OCI-LY7 (cell line): ENCODE measurements at regions of chr15 and their contacts with region 1.

Region 1: DNA sequence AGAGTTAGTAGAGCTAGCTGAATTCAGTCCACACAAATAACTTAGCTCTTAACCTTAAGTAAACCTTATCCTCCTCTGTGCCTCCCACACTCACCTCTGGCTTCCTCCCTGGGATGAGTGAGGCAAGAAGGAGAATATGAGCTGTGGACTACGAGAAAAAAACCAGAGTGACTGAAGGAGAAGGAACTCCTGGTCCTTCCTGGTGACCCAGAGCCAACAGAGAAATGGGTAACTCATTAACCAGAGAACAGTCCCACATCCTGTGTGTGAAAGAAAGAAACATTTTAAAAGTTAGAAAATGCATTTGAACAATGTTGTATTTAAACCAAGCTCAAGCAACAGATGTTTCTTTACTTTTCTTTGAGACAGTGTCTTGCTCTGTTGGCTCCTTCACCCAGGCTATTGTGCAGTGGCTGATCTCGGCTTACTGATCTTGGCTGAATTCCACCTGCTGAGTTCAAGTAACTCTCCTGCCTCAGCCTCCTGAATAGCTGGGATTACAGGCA is 27.5 kb upstream of the FAM81A start:
- DNase-seq: peak; percentile 55
- H3K4me3 ChIP-seq: no peak overlapping the region
- H3K27ac ChIP-seq: peak overlapping the region; percentile 81
- H3K4me1 ChIP-seq: peaks cover 94% of the 10 kb centered on the region
- CTCF ChIP-seq: no peak

Region 2: DNA sequence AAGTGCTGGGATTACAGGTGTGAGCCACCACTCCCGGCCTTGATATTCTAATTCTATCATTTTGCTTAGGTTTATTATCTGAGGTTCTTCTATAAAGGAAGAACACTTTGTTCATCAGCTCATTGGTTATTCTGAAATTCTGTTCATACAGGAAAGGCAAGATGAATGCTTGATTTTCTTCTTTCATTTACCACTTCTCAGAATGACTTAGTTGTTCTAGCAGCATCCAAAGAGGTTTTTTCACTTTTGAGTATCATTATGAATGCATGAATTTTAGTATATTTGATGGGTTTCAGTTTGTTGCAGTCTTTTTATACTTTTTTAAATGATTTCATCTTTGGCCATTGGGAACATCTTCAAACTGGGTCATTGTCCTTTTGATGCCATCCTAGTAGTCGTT is 371.2 kb before region 1 on chr15:
- CTCF ChIA-PET with region 1: no interaction called
- POLR2A ChIA-PET with region 1: no interaction called
- intact Hi-C with region 1: no loop called
- DNase-seq: no peak
- H3K4me3 ChIP-seq: no peak overlapping the region
- H3K27ac ChIP-seq: no peak overlapping the region
- H3K4me1 ChIP-seq: no peaks in the 10 kb centered on the region
- CTCF ChIP-seq: no peak

Region 3: GRCh38 chr15:59174835-59175831 is 235.3 kb before region 1 on chr15:
- CTCF ChIA-PET with region 1: no interaction called
- POLR2A ChIA-PET with region 1: no interaction called
- intact Hi-C with region 1: loop called (anchors 1 kb)
- DNase-seq: peak; percentile 71
- H3K4me3 ChIP-seq: no peak overlapping the region
- H3K27ac ChIP-seq: no peak overlapping the region
- H3K4me1 ChIP-seq: no peaks in the 10 kb centered on the region
- CTCF ChIP-seq: peak; percentile 85

Region 4: GRCh38 chr15:59247364-59247763 is 163.1 kb before region 1 on chr15:
- CTCF ChIA-PET with region 1: interaction called, 7 read pairs
- POLR2A ChIA-PET with region 1: interaction called, 4 read pairs
- intact Hi-C with region 1: loop called (anchors 1 kb)
- DNase-seq: peak; percentile 88
- H3K4me3 ChIP-seq: no peak overlapping the region
- H3K27ac ChIP-seq: no peak overlapping the region
- H3K4me1 ChIP-seq: peaks cover 64% of the 10 kb centered on the region
- CTCF ChIP-seq: peak; percentile 93

Region 5: DNA sequence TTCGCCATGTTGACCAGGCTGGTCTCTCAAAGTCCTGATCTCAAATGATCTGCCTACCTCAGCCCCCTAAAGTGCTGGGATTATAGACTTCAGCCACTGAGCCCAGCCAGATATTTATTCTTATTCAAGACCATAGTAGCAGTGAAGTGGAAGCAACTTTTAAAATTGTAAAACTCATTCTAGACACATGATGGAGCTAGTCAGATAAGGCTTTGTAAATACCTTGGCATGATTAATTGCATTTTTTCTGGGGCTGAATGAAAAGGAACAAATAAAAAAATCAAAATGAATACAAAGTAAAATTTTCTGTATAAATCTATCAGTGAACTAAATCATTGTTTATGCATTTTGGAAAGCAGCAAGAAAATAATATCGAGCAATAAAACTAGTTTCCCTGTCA is 33.7 kb before region 1 on chr15:
- CTCF ChIA-PET with region 1: interaction called, 10 read pairs
- POLR2A ChIA-PET with region 1: interaction called, 37 read pairs
- intact Hi-C with region 1: loop called (anchors 1 kb)
- DNase-seq: peak; percentile 65
- H3K4me3 ChIP-seq: no peak overlapping the region
- H3K27ac ChIP-seq: no peak overlapping the region
- H3K4me1 ChIP-seq: peaks cover 24% of the 10 kb centered on the region
- CTCF ChIP-seq: peak; percentile 78

Region 6: GRCh38 chr15:59399465-59400102 is 10.9 kb before region 1 on chr15:
- CTCF ChIA-PET with region 1: interaction called, 6 read pairs
- POLR2A ChIA-PET with region 1: interaction called, 103 read pairs
- intact Hi-C with region 1: no loop called
- DNase-seq: peak; percentile 90
- H3K4me3 ChIP-seq: peak overlapping the region; percentile 54
- H3K27ac ChIP-seq: peak overlapping the region; percentile 81
- H3K4me1 ChIP-seq: peaks cover 98% of the 10 kb centered on the region
- CTCF ChIP-seq: peak; percentile 44; the same call in 1 of the 2 replicates

Region 7: DNA sequence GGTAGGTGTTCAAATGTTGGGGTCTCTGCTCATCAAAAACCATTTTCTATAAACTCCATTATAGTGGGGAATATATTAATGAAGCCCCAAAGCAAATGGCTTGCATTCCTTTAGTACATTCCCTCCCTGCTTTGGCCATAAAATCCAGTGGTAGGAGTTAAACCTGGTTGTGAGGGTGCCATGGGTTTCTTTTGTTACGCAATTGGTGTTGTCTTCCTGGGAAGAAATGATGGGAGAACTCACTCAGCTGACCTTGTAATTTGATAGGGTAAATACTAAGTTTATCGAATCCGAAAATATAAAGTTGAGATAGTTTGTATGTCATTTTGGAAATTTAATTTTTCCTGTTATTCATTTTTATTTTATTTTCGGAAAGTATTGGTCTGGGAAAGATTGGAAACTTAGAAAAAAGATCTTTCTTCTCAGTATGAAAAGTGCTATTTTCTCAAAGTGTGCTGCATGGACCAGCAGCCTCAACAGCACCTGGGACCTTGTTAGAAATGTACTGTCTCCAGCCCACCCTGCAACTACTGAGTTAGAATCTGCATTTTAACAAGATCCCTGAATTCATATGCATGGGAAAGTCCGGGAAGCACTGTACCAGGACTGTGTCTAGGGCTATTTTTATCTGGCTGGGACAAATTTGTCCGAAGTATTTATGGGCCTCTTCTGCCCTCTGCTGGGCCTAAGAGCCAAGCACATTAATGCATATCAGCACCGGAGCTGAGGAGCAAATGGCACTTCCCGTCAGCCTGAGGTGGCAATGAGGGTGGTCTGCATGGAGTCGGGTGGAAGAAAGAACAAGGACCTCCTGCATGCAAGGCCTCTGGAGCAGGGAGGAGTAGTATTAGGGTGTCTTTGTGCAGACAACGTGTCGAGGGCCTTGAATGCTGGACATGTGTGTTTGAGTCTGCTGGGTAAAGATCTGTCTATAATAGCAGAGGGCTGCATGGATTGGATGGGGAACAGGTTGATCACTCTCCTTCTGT is 82.2 kb after region 1 on chr15:
- CTCF ChIA-PET with region 1: no interaction called
- POLR2A ChIA-PET with region 1: interaction called, 5 read pairs
- intact Hi-C with region 1: loop called (anchors 1 kb)
- DNase-seq: peak; percentile 76
- H3K4me3 ChIP-seq: no peak overlapping the region
- H3K27ac ChIP-seq: no peak overlapping the region
- H3K4me1 ChIP-seq: no peaks in the 10 kb centered on the region
- CTCF ChIP-seq: peak; percentile 98

Region 8: GRCh38 chr15:59688841-59689625 is 278.6 kb after region 1 on chr15 and contains the start of gene BNIP2:
- CTCF ChIA-PET with region 1: no interaction called
- POLR2A ChIA-PET with region 1: no interaction called
- intact Hi-C with region 1: loop called (anchors 5 kb)
- DNase-seq: peak; percentile 98
- H3K4me3 ChIP-seq: peak within 1 kb of the TSS; percentile 97
- H3K27ac ChIP-seq: peak within 1 kb of the TSS; percentile 95
- H3K4me1 ChIP-seq: peaks cover 51% of the 10 kb centered on the region
- CTCF ChIP-seq: no peak; the same call in 1 of the 2 replicates
- total RNA-seq, gene BNIP2: 65.3 and 107 TPM in 2 replicates